PC-9 (cell line): ENCODE measurements at regions of chr1 and their contacts with region 1.

Region 1: GRCh38 chr1:209354111-209354839 is 229.2 kb upstream of the CAMK1G start:
- DNase-seq: peak; percentile 78 to 79
- H3K4me3 ChIP-seq: no peak overlapping the region
- H3K27ac ChIP-seq: no peak overlapping the region
- H3K4me1 ChIP-seq: peaks cover 31% of the 10 kb centered on the region
- H3K27me3 ChIP-seq: no peaks in the 10 kb centered on the region
- CTCF ChIP-seq: peak; percentile 92

Region 2: GRCh38 chr1:208245185-208245705 is 1109.0 kb before region 1 on chr1:
- CTCF ChIA-PET with region 1: no interaction called
- POLR2A ChIA-PET with region 1: no interaction called
- intact Hi-C with region 1: loop called (anchors 10 kb)
- DNase-seq: peak; percentile 74 to 76
- H3K4me3 ChIP-seq: peak overlapping the region; percentile 94
- H3K27ac ChIP-seq: no peak overlapping the region
- H3K4me1 ChIP-seq: peaks cover 28% of the 10 kb centered on the region
- H3K27me3 ChIP-seq: peaks cover 4% of the 10 kb centered on the region; the same call in 1 of the 2 replicates
- CTCF ChIP-seq: peak; percentile 86

Region 3: GRCh38 chr1:208757846-208758245 is 596.4 kb before region 1 on chr1:
- CTCF ChIA-PET with region 1: no interaction called
- POLR2A ChIA-PET with region 1: no interaction called
- intact Hi-C with region 1: loop called (anchors 10 kb)
- DNase-seq: no peak
- H3K4me3 ChIP-seq: no peak overlapping the region
- H3K27ac ChIP-seq: no peak overlapping the region
- H3K4me1 ChIP-seq: no peaks in the 10 kb centered on the region
- H3K27me3 ChIP-seq: no peaks in the 10 kb centered on the region
- CTCF ChIP-seq: no peak

Region 4: DNA sequence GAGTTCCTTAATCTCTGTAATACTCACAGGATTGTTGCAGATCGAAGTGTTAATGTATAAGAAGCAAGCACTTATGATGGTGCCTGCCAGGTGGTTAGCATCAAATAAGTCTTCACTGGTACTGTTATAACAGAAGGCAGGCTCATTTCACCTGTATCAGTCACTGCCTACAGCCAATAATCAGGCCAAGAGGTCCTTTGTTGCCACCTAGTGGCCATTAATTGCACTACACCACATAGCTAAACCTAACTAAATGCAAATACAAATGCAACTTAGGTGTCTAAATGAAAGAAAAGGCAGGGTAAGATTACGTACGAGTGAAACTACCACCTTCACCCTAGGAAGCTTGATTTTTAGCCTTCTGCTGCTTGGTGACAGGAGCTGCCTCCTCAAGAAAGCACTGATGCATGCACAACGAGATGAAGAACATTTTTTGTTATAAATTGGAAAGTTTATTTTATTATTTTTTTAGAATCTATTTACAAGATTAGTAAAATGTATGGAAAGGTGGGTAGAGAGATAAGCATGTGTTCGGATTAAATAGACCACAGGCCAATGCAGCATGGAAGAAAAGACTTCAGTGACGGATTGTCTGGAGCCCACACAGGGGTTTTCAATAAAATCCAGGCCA is 105.5 kb before region 1 on chr1:
- CTCF ChIA-PET with region 1: interaction called, 3 read pairs
- POLR2A ChIA-PET with region 1: no interaction called
- intact Hi-C with region 1: loop called (anchors 1 kb)
- DNase-seq: peak; percentile 50 to 55
- H3K4me3 ChIP-seq: no peak overlapping the region
- H3K27ac ChIP-seq: no peak overlapping the region
- H3K4me1 ChIP-seq: no peaks in the 10 kb centered on the region
- H3K27me3 ChIP-seq: no peaks in the 10 kb centered on the region
- CTCF ChIP-seq: peak; percentile 95

Region 5: GRCh38 chr1:209335178-209335577 is 19.1 kb before region 1 on chr1:
- CTCF ChIA-PET with region 1: no interaction called
- POLR2A ChIA-PET with region 1: no interaction called
- intact Hi-C with region 1: no loop called
- DNase-seq: peak; percentile 41
- H3K4me3 ChIP-seq: no peak overlapping the region
- H3K27ac ChIP-seq: no peak overlapping the region
- H3K4me1 ChIP-seq: no peaks in the 10 kb centered on the region
- H3K27me3 ChIP-seq: no peaks in the 10 kb centered on the region
- CTCF ChIP-seq: peak; percentile 83

Region 6: DNA sequence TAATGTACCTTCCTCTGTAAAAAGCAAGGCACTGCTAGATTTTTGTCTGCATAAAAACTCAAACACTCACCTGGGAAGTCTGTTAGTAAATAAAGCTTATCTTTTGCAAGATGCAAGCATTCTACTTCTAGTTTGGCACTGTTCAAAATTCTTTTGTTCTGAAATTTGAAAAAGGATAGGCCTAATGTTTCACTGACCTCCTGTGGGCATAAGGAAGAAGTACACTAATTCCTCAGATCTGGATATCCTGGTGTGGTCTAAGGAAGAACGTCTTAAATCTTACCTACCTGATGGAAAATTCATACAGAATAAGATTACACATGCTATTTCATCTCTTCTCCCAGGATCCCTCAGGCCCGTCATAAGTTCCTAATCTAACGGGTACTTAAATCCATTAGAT is 135.7 kb after region 1 on chr1:
- CTCF ChIA-PET with region 1: no interaction called
- POLR2A ChIA-PET with region 1: no interaction called
- intact Hi-C with region 1: loop called (anchors 1 kb)
- DNase-seq: peak in 1 of 2 experiments; percentile 59
- H3K4me3 ChIP-seq: no peak overlapping the region
- H3K27ac ChIP-seq: no peak overlapping the region
- H3K4me1 ChIP-seq: no peaks in the 10 kb centered on the region
- H3K27me3 ChIP-seq: no peaks in the 10 kb centered on the region
- CTCF ChIP-seq: peak; percentile 80

Region 7: GRCh38 chr1:209576798-209577197 is 222.5 kb after region 1 on chr1:
- CTCF ChIA-PET with region 1: no interaction called
- POLR2A ChIA-PET with region 1: no interaction called
- intact Hi-C with region 1: no loop called
- DNase-seq: peak; percentile 52 to 80
- H3K4me3 ChIP-seq: no peak overlapping the region
- H3K27ac ChIP-seq: no peak overlapping the region
- H3K4me1 ChIP-seq: no peaks in the 10 kb centered on the region
- H3K27me3 ChIP-seq: peaks cover 25% of the 10 kb centered on the region; the same call in 1 of the 2 replicates
- CTCF ChIP-seq: peak; percentile 89